MCF 10A (cell line): ENCODE measurements at regions of chr6 and their contacts with region 1.

Region 1: DNA sequence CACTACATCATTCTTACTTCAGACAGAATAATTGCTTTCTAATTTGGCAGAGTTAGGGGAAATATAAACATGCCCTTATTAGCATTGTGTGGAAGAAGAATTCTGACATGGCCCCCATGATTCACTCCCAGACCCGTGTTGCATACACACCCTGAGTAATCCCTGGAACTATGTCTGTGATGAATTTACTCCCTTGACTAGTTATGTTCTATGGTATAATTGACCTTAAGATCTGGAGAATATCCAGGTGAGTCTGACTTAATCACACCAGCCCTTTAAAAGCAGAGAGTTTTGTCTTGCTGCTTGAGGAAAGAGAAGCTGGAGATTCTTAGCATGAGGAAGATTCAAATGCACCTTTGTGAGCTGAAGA is 262.9 kb downstream of the SOX4 start:
- DNase-seq: peak; percentile 81
- H3K4me3 Mint-ChIP-seq: peak overlapping the region; percentile 50
- H3K27ac Mint-ChIP-seq: peak overlapping the region; percentile 90
- H3K4me1 Mint-ChIP-seq: peaks cover 13% of the 10 kb centered on the region
- H3K27me3 Mint-ChIP-seq: no peaks in the 10 kb centered on the region
- CTCF ChIP-seq: no peak

Region 2: DNA sequence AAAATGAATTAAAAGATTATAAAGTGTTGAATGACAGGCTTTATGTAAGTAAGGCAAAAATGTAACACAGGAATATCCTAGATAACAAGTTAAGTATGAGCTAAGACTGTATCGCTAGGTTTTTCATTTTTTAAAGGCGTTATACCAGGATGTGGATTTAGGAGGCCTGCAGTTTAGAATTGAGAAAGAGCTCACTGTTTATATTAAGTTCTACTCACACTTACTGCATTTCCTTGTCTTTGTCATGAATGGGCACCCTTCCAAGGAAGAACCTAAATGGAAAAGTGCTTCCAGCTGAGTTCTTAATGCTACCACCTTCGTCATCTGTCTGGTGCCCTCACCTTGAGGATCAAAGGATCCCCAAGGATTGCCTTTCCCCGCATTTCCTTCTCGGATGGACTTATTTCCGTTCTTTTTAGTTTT is 114.2 kb before region 1 on chr6:
- CTCF ChIA-PET with region 1: interaction called, 3 read pairs
- POLR2A ChIA-PET with region 1: no interaction called
- intact Hi-C with region 1: loop called (anchors 5 kb)
- DNase-seq: peak; percentile 96
- H3K4me3 Mint-ChIP-seq: peak overlapping the region; percentile 36
- H3K27ac Mint-ChIP-seq: peak overlapping the region; percentile 94
- H3K4me1 Mint-ChIP-seq: peaks cover 46% of the 10 kb centered on the region
- H3K27me3 Mint-ChIP-seq: no peaks in the 10 kb centered on the region
- CTCF ChIP-seq: no peak

Region 3: GRCh38 chr6:21873562-21873961 is 17.1 kb after region 1 on chr6:
- CTCF ChIA-PET with region 1: interaction called, 3 read pairs
- POLR2A ChIA-PET with region 1: interaction called, 15 read pairs
- intact Hi-C with region 1: no loop called
- DNase-seq: peak; percentile 97
- H3K4me3 Mint-ChIP-seq: peak overlapping the region; percentile 5
- H3K27ac Mint-ChIP-seq: no peak overlapping the region
- H3K4me1 Mint-ChIP-seq: peaks cover 23% of the 10 kb centered on the region
- H3K27me3 Mint-ChIP-seq: no peaks in the 10 kb centered on the region
- CTCF ChIP-seq: no peak

Region 4: DNA sequence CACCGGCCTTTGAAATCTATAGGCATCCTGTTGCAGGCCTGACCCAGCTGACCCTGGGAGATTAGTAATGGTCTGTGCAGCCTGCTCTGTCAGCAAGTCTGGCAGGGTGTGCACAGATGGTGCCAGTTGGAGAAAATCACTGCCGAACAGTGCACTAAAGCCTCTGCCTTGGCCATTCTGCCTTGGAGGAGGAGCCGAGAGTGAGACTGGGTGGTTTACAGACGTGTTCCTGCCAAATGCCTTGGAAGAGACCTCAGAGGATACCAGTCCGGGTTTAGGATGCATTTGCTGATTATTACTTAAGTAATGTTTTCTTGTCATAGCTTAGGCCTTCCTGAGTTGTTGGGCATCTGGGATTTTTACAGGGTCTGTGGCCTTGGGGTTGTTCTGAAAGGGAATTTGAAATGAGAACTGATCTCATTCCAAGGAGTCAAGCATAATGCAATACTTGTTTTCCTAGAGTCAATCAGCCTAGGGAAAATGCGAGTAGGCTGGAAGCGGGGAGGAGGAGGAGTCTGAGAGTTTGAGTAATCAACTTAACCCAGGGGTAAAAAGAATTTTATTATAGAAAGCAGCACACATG is 29.2 kb after region 1 on chr6:
- CTCF ChIA-PET with region 1: interaction called, 3 read pairs
- POLR2A ChIA-PET with region 1: interaction called, 6 read pairs
- intact Hi-C with region 1: loop called (anchors 2 kb)
- DNase-seq: peak; percentile 71
- H3K4me3 Mint-ChIP-seq: no peak overlapping the region
- H3K27ac Mint-ChIP-seq: no peak overlapping the region
- H3K4me1 Mint-ChIP-seq: peaks cover 8% of the 10 kb centered on the region
- H3K27me3 Mint-ChIP-seq: no peaks in the 10 kb centered on the region
- CTCF ChIP-seq: no peak